ENCODE measurements at regions of chr12 and their contacts with region 1.

Region 1: GRCh38 chr12:49967042-49967776 is 5.5 kb downstream of the AQP5 start:
- DNase-seq: peak; percentile 70 to 97
- H3K4me3 ChIP-seq: peak overlapping the region; percentile 26
- H3K4me1 ChIP-seq: peaks cover 5% of the 10 kb centered on the region
- H3K27me3 ChIP-seq: 0 out of 2 replicates have a peak, but pooled peaks cover 4% of the 10 kb centered on the region

Region 2: GRCh38 chr12:50066433-50066832 is 99.2 kb after region 1 on chr12:
- in situ Hi-C with region 1: loop called (anchors 5 kb)
- DNase-seq: peak in 1 of 2 experiments; percentile 49
- H3K4me3 ChIP-seq: no peak overlapping the region
- H3K4me1 ChIP-seq: peaks cover 3% of the 10 kb centered on the region; the same call in 1 of the 2 replicates
- H3K27me3 ChIP-seq: no peaks in the 10 kb centered on the region